Head of caudate nucleus (tissue), 42 donors: ENCODE measurements at regions of chr2 and their contacts with region 1.

Region 1: GRCh38 chr2:176454893-176455811 is 185.9 kb downstream of the MTX2 start:
- DNase-seq: peak; percentile 48 to 98 (median 92)

Region 2: DNA sequence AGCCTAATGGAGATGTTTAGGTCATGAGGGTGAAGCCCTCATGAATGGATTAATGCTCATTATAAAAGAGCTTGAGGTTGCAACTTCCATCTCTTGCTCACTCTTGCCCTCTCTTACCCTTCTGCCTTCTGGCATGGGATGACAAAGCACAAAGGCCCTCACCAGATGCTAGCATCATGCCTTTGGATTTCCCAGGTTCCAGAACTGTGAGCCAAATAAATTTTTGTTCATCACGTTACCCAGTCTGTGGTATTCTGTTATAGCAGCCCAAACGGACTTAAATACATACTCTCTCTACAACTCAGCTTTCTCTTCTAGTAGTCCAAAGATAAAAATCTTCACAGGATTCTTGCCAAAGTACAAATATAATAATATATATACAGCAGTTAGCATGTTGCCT is 528.9 kb before region 1 on chr2:
- intact Hi-C with region 1: no loop called
- DNase-seq: no peak

Region 3: GRCh38 chr2:176544991-176545956 is 90.1 kb after region 1 on chr2:
- intact Hi-C with region 1: loop called (anchors 10 kb)
- DNase-seq: no peak

Region 4: DNA sequence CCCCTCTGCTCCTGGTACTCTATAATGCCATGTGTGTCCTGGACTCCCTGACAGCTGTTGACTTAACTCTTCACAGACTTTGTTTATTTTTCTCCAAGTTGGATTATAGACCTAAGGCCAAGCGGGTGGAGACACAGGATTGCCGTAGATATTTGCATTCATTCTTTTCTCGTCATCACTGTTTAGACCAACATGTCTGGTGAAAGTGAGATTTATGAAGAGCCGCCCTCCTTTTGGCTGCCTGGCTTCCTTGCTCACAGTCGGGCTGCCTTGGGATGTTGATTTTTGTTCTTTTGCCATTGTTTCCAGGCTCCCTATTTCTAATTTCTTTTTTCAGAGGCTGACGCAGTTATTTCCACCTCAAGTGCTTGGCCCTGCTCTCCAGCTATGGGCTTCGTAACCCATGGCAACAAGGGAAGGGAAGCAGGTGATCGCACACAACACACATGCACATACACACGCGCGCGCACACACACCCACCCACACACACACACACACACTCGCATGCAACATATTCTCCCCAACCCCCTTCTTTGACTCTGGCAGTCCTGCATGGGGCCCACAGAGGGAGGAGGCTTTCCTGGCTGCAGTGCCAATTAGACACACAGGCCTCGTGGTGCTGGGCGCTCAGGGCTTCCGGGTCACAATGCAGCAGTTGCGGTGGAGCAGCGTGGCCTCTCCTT is 110.6 kb after region 1 on chr2:
- intact Hi-C with region 1: no loop called
- DNase-seq: peak in 27 of 42 donors; percentile 5 to 66 (median 24)